Esophagus squamous epithelium (tissue), 5 donors: ENCODE measurements at regions of chr6 and their contacts with region 1.

Region 1: DNA sequence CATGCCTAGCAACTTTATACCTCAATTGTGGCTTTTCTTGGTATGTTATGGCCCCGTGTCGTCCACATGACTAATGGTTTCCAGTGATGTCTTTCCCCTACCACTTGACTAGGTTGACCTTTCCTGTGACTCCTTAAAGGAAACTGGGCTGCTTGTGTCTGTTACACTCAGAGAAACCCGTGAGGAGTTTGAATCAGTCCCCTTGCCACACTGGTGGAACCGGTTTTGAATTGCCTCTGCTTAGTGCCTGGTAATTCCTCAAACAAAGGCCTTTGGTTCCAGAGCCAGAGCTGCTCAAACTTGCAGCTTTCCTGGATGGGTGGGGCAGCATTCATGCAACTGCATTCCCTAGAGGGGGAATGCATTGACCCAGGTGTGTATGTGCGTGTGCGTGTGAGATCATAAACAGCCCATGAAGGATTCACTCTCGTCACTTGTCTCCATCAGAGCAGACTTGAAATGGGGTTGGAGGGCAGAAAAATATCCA is 22.0 kb downstream of the ECT2L start:
- DNase-seq: no peak
- H3K4me3 ChIP-seq: no peak overlapping the region
- H3K27ac ChIP-seq: peak overlapping the region; percentile 83 to 90 (median 86)
- H3K4me1 ChIP-seq: peaks cover 7 to 68% (median 12%) of the 10 kb centered on the region in 3 donors
- H3K27me3 ChIP-seq: no peaks in the 10 kb centered on the region
- CTCF ChIP-seq: no peak
- POLR2A ChIP-seq: peak in 2 of 4 donors; percentile 12 to 17

Region 2: GRCh38 chr6:138662471-138662870 is 155.4 kb before region 1 on chr6:
- intact Hi-C with region 1: no loop called
- DNase-seq: no peak
- H3K4me3 ChIP-seq: no peak overlapping the region
- H3K27ac ChIP-seq: peak overlapping the region in 3 of 4 donors; percentile 63 to 74 (median 73)
- H3K4me1 ChIP-seq: peaks cover 0 to 38% (median 0%) of the 10 kb centered on the region in 3 donors
- H3K27me3 ChIP-seq: no peaks in the 10 kb centered on the region
- CTCF ChIP-seq: no peak
- POLR2A ChIP-seq: no peak

Region 3: GRCh38 chr6:138987640-138988468 is 170.0 kb after region 1 on chr6 and contains the start of gene REPS1:
- intact Hi-C with region 1: loop called (anchors 10 kb)
- DNase-seq: peak; percentile 59
- H3K4me3 ChIP-seq: peak within 1 kb of the TSS; percentile 70 to 91 (median 84)
- H3K27ac ChIP-seq: peak within 1 kb of the TSS; percentile 92 to 96 (median 95)
- H3K4me1 ChIP-seq: peaks cover 5 to 50% (median 22%) of the 10 kb centered on the region in 3 donors
- H3K27me3 ChIP-seq: no peaks in the 10 kb centered on the region
- CTCF ChIP-seq: peak; percentile 97 to 100 (median 98)
- POLR2A ChIP-seq: peak in 3 of 4 donors; percentile 60 to 82 (median 75)
- total RNA-seq, gene REPS1: 30.8 to 60.3 (median 43.2) TPM

Region 4: GRCh38 chr6:139364302-139364981 is 546.6 kb after region 1 on chr6:
- intact Hi-C with region 1: loop called (anchors 10 kb)
- DNase-seq: no peak
- H3K4me3 ChIP-seq: no peak overlapping the region
- H3K27ac ChIP-seq: no peak overlapping the region
- H3K4me1 ChIP-seq: peaks cover 0 to 13% (median 2%) of the 10 kb centered on the region in 3 donors
- H3K27me3 ChIP-seq: no peaks in the 10 kb centered on the region
- CTCF ChIP-seq: peak; percentile 67 to 88 (median 68)
- POLR2A ChIP-seq: no peak